Left cardiac atrium (tissue), 4 donors: ENCODE measurements at regions of chr7 and their contacts with region 1.

Region 1: DNA sequence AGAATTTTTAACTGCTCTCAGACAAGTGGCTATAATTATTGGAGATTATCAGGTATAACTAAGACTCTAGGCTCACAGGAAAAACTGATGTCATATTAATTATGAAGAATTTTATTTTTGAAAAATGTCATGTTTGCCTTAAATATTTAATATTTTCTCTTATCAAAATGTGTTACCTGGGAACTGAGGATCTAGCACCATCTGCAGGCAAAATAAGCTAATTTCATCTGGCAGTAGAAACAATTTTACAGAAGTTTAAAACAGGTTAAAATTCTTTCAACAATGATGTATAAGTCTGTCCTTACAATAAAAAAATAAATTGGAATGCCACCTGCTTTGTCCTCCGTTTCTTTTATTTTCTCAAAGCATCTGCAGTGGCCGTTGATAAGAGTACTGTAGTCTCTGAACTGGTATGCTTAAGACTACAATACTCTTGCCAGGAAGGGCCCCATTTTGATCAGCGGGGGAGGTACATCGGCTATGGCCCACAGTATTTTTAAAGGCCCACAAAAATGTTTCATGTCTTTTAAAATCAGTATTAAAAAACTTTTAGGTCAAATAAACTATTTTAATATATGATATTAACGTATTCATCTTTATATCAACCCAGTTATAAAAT is 81.3 kb downstream of the VWDE start:
- DNase-seq: no peak
- ATAC-seq: no peak

Region 2: DNA sequence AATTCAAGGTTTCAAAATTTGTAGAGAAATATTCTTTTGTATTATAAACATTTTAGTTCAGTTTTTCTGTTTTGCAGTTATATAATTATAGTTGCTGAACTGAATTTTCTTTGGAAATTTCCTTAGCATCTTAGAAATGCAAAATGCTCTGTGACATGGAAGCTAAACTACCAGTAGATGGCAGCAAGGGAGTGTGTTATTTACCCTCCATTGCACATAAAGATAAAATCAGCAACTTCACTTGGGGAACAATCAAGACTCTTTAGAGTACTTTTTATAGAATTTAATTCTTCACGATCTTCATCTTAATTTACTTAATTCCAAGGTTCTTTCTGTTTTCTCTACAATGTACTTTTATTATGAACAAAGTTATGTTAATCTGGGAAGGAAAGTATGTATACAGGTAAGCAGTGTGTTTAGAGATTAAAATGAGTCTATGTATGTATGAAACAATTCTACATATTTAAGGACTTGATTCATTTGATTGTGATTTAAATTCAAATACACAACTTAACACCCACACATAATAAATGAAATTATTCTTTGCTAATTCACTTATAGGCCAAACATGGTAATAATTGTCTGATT is 894.6 kb before region 1 on chr7:
- intact Hi-C with region 1: loop called in 1 of 2 experiments (anchors 5 kb)
- DNase-seq: no peak
- ATAC-seq: peak in 1 of 2 donors; percentile 61

Region 3: GRCh38 chr7:12067141-12067831 is 255.1 kb before region 1 on chr7:
- intact Hi-C with region 1: loop called (anchors 2 to 5 kb)
- DNase-seq: peak; percentile 31
- ATAC-seq: peak; percentile 65 to 72